CD4-positive, alpha-beta memory T cell (primary cell): ENCODE measurements at regions of chr4 and their contacts with region 1.

Region 1: DNA sequence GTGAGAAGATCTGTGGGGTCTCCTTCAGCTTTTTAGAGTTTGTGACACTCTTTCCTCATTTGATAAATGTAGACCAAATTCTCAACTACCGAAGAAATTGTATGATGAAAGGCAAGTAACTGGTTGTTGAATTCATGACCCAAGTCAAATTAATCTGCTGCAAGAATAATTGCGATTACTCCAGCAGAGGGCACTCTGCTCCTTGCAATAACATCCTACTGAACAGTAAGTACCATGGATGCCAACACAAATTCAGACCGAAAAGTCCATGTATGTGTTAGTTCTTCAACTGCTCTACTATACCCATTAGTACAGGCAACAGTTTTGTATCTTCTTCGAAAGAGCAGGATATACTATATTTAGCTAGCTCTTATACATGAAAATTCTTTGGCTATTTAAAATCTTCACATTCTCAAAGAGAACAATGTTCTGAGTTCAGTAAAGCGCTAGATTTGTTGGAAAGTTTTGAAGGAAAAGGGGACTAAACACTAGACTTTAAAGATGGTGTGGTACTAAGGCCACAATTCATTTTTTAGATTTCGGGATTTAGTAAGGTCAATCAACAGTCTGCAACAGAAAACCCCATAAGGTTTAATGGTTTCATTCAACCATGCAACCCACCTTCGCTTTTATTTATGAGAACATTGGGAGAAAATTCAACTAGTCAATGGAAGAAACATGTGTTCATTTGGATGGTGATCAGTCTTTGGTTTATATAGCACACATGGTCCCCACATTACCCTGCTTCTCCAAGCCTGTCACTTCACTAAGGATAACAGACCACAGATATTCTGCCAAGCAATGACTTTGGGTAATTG is 105.4 kb upstream of the TBC1D9 start:
- DNase-seq: peak in 4 of 5 donors; percentile 29 to 37 (median 34)
- H3K4me3 ChIP-seq: no peak overlapping the region
- H3K4me3 Mint-ChIP-seq: no peak overlapping the region
- H3K27ac ChIP-seq: no peak overlapping the region
- H3K27ac Mint-ChIP-seq: no peak overlapping the region
- H3K4me1 ChIP-seq: no peaks in the 10 kb centered on the region
- H3K4me1 Mint-ChIP-seq: peaks cover 6 to 11% (median 9%) of the 10 kb centered on the region in 4 donors
- H3K27me3 ChIP-seq: no peaks in the 10 kb centered on the region
- H3K27me3 Mint-ChIP-seq: peaks cover 12 to 15% of the 10 kb centered on the region in 2 donors

Region 2: GRCh38 chr4:141133146-141133998 is 271.8 kb after region 1 on chr4 and contains the start of gene RNF150:
- CTCF ChIA-PET with region 1: no interaction called
- POLR2A ChIA-PET with region 1: no interaction called
- intact Hi-C with region 1: loop called (anchors 5 kb)
- DNase-seq: peak in 2 of 5 donors; percentile 0 to 5
- H3K4me3 ChIP-seq: peak within 1 kb of the TSS in 1 of 2 donors; percentile 9
- H3K4me3 Mint-ChIP-seq: peak within 1 kb of the TSS; percentile 80 to 93 (median 87)
- H3K27ac ChIP-seq: no peak within 1 kb of the TSS
- H3K27ac Mint-ChIP-seq: peak within 1 kb of the TSS in 1 of 7 donors; percentile 9
- H3K4me1 ChIP-seq: peaks cover 8% of the 10 kb centered on the region
- H3K4me1 Mint-ChIP-seq: peaks cover 7 to 14% (median 10%) of the 10 kb centered on the region in 4 donors
- H3K27me3 ChIP-seq: no peaks in the 10 kb centered on the region
- H3K27me3 Mint-ChIP-seq: peaks cover 46 to 55% of the 10 kb centered on the region in 2 donors
- total RNA-seq, gene RNF150: not detected